Heart right ventricle (tissue), 16 donors: ENCODE measurements at regions of chr10 and their contacts with region 1.

Region 1: GRCh38 chr10:13038391-13038790 is 36.9 kb upstream of the CCDC3 start:
- DNase-seq: no peak
- ATAC-seq: no peak
- H3K4me3 ChIP-seq: no peak overlapping the region
- H3K27ac ChIP-seq: no peak overlapping the region
- H3K4me1 ChIP-seq: no peaks in the 10 kb centered on the region
- H3K27me3 ChIP-seq: peaks cover 0 to 15% (median 9%) of the 10 kb centered on the region in 7 donors
- CTCF ChIP-seq: no peak

Region 2: DNA sequence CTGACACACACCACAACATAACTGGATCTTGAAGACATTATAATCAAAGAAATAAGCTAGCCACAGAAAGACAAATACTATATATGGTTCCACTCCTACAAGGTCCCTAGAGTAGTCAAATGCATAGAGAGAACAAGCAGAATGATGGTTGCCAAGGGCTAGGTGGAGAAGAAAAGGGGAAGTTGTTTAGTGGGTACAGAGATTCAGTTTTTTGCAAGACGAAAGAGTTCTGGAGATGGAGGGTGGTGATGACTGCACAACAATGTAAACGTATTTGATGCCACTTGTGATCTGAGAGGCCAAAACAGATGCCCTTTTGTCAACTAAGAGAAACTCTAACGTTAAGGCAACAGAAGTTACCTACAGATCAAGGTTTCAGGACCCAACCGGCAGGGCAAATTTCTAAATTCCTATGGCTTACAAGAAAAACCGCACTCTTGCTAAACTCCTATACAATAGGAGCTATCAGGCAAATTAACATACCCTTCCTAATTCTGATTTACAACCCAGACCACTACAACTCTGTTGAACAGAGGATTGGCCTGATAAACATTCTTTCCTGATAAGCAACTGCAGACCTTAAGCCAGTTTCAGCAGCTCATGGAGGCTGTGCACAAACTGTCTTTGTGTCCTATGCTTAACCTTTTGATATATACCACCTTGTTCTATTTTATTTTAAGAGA is 1667.3 kb after region 1 on chr10:
- intact Hi-C with region 1: loop called in 1 of 10 experiments (anchors 10 kb)
- DNase-seq: no peak
- ATAC-seq: no peak
- H3K4me3 ChIP-seq: no peak overlapping the region
- H3K27ac ChIP-seq: no peak overlapping the region
- H3K4me1 ChIP-seq: peaks cover 0 to 4% (median 0%) of the 10 kb centered on the region in 9 donors
- H3K27me3 ChIP-seq: peaks cover 0 to 4% (median 0%) of the 10 kb centered on the region in 7 donors
- CTCF ChIP-seq: no peak

Region 3: DNA sequence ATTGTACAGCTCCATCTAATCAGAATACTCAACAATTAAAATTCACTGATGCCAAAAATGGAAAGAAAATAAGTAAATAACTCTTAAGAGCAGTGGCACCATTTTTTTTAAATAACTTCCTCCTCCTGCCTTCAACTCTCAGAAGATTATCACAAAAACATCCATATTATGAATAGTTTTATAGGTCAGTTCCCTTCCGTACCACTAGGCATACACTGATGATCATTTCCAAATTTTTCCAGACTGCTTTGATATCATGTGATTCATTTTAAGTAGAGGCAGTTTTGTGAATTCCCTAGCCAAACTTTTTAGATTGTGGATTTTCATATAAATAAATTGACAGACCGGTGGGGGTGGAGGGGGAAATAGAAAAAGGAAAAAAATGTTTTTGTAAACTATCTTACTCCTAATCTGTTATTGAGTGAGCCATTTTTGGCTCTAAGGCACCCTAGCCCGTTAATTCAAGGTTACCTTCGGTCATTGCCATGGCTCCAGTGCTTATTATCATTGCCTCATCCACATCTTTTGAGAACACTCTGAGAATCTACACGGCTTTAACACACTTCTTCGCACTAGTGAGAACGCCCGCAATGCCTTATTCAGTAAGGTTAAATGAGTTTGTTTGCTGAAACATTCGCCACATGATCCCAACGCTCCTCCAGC is 1735.3 kb after region 1 on chr10:
- intact Hi-C with region 1: loop called in 1 of 10 experiments (anchors 5 kb)
- DNase-seq: no peak
- ATAC-seq: no peak
- H3K4me3 ChIP-seq: no peak overlapping the region
- H3K27ac ChIP-seq: no peak overlapping the region
- H3K4me1 ChIP-seq: peaks cover 0 to 8% (median 0%) of the 10 kb centered on the region in 9 donors
- H3K27me3 ChIP-seq: no peaks in the 10 kb centered on the region
- CTCF ChIP-seq: peak in 1 of 9 donors; percentile 28